ENCODE measurements at regions of chr17 and their contacts with region 1.

Region 1: DNA sequence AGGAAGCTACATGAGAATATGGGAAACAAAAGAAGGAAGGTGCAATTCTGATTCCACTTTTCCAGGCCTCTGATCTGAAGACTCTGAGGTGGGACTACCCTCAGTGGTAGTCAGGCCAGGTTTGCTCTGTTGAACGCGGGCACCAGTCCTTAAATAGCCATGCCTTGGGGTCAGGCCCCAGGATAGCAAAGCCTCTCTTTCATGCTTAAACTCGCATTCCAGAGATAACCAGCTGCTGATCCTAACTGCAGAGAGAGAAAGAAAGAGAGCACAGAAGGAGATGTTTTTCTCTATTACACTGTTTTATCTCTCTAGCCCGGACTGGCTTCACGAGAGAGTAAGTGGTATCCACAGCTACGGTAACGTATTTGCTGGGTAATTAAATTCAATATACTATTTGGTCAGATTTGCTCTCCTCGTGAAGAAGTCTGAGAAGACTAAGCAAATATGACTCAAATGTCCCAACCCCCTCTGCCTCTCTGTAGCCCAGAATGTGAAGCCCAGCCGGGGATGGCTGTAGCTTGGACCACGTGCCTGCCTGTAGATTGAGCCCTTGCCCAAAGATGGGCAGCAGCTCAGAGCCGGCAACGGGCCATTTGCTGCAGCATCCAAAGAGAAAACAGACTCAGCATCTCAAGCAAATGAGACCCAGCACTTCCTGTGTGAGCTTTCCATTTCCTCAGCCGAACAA is 122.2 kb downstream of the SMG6 start:
- DNase-seq: peak; percentile 41 to 57
- H3K4me3 ChIP-seq: no peak overlapping the region
- H3K4me3 Mint-ChIP-seq: no peak overlapping the region
- H3K27ac Mint-ChIP-seq: peak overlapping the region; percentile 12
- H3K4me1 ChIP-seq: peaks cover 23% of the 10 kb centered on the region
- H3K4me1 Mint-ChIP-seq: peaks cover 19% of the 10 kb centered on the region
- H3K27me3 ChIP-seq: no peaks in the 10 kb centered on the region
- H3K27me3 Mint-ChIP-seq: no peaks in the 10 kb centered on the region
- CTCF ChIP-seq: no peak

Region 2: DNA sequence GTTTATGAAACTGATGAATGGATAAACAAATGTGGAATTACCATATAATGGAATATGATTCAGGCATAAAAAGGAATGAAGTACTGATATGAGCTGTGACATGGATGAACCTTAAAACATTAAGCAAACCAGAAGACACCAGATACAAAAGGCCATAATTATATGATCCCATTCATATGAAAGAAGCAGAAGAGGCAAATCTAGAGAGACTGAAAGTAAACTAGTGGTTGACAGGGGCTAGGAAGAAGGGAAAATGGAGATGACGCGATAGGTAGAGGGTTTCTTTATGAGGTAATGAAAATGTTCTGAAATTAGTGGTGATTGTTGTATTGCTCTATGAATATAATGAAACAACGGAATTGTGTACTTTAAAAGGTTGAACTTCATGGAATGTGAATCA is 38.0 kb before region 1 on chr17:
- CTCF ChIA-PET with region 1: no interaction called
- POLR2A ChIA-PET with region 1: interaction called, 13 read pairs
- intact Hi-C with region 1: no loop called
- DNase-seq: no peak
- H3K4me3 ChIP-seq: no peak overlapping the region
- H3K4me3 Mint-ChIP-seq: no peak overlapping the region
- H3K27ac Mint-ChIP-seq: no peak overlapping the region
- H3K4me1 ChIP-seq: peaks cover 4% of the 10 kb centered on the region; the same call in 1 of the 2 replicates
- H3K4me1 Mint-ChIP-seq: no peaks in the 10 kb centered on the region
- H3K27me3 ChIP-seq: no peaks in the 10 kb centered on the region
- H3K27me3 Mint-ChIP-seq: no peaks in the 10 kb centered on the region
- CTCF ChIP-seq: no peak

Region 3: GRCh38 chr17:2215616-2216364 is 34.4 kb after region 1 on chr17:
- CTCF ChIA-PET with region 1: no interaction called
- POLR2A ChIA-PET with region 1: no interaction called
- intact Hi-C with region 1: no loop called
- DNase-seq: no peak
- H3K4me3 ChIP-seq: no peak overlapping the region
- H3K4me3 Mint-ChIP-seq: no peak overlapping the region
- H3K27ac Mint-ChIP-seq: no peak overlapping the region
- H3K4me1 ChIP-seq: no peaks in the 10 kb centered on the region
- H3K4me1 Mint-ChIP-seq: peaks cover 5% of the 10 kb centered on the region
- H3K27me3 ChIP-seq: no peaks in the 10 kb centered on the region
- H3K27me3 Mint-ChIP-seq: no peaks in the 10 kb centered on the region
- CTCF ChIP-seq: no peak

Region 4: GRCh38 chr17:2406903-2407790 is 225.8 kb after region 1 on chr17:
- CTCF ChIA-PET with region 1: no interaction called
- POLR2A ChIA-PET with region 1: no interaction called
- intact Hi-C with region 1: no loop called
- DNase-seq: peak; percentile 40 to 76
- H3K4me3 ChIP-seq: no peak overlapping the region
- H3K4me3 Mint-ChIP-seq: peak overlapping the region; percentile 34
- H3K27ac Mint-ChIP-seq: peak overlapping the region; percentile 66
- H3K4me1 ChIP-seq: peaks cover 17% of the 10 kb centered on the region; the same call in 1 of the 2 replicates
- H3K4me1 Mint-ChIP-seq: peaks cover 13% of the 10 kb centered on the region
- H3K27me3 ChIP-seq: no peaks in the 10 kb centered on the region
- H3K27me3 Mint-ChIP-seq: no peaks in the 10 kb centered on the region
- CTCF ChIP-seq: no peak

Region 5: DNA sequence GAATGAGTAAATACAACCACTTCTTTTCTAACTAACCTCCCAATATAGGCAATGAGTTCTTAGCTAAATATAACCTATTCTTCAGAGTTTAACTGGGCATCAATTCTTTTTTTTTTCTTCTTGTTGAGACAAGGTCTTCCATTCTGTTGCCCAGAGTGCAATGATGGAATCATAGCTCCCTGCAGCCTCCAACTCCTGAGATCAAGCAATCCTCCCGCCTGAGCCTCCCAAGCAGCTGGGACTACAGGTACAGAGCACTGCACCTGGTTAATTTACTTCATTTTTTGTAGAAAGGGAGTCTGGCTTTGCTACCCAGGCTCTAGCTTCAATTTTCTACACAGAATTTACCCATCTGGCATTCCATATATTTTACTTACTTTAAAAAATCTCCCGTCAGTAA is 329.2 kb after region 1 on chr17:
- CTCF ChIA-PET with region 1: no interaction called
- POLR2A ChIA-PET with region 1: no interaction called
- intact Hi-C with region 1: no loop called
- DNase-seq: no peak
- H3K4me3 ChIP-seq: peak overlapping the region; percentile 53
- H3K4me3 Mint-ChIP-seq: no peak overlapping the region
- H3K27ac Mint-ChIP-seq: no peak overlapping the region
- H3K4me1 ChIP-seq: peaks cover 7% of the 10 kb centered on the region
- H3K4me1 Mint-ChIP-seq: peaks cover 12% of the 10 kb centered on the region
- H3K27me3 ChIP-seq: no peaks in the 10 kb centered on the region
- H3K27me3 Mint-ChIP-seq: no peaks in the 10 kb centered on the region
- CTCF ChIP-seq: no peak